Prostate gland (tissue), 2 donors: ENCODE measurements at regions of chr6 and their contacts with region 1.

Region 1: GRCh38 chr6:57257911-57258541 is 35.9 kb upstream of the RAB23 start:
- DNase-seq: no peak
- H3K4me3 ChIP-seq: no peak overlapping the region
- H3K27ac ChIP-seq: peak overlapping the region; percentile 63 to 66
- H3K4me1 ChIP-seq: no peaks in the 10 kb centered on the region
- H3K27me3 ChIP-seq: no peaks in the 10 kb centered on the region
- CTCF ChIP-seq: no peak
- POLR2A ChIP-seq: no peak

Region 2: GRCh38 chr6:57172136-57173055 is 85.6 kb before region 1 on chr6 and contains the start of gene BAG2:
- intact Hi-C with region 1: loop called (anchors 2 kb)
- DNase-seq: peak; percentile 68
- H3K4me3 ChIP-seq: peak within 1 kb of the TSS; percentile 66 to 80
- H3K27ac ChIP-seq: peak within 1 kb of the TSS; percentile 88 to 89
- H3K4me1 ChIP-seq: no peaks in the 10 kb centered on the region
- H3K27me3 ChIP-seq: no peaks in the 10 kb centered on the region
- CTCF ChIP-seq: peak in 2 of 4 experiments; percentile 13 to 47
- POLR2A ChIP-seq: peak; percentile 48
- total RNA-seq, gene BAG2: 5.4 to 6.8 TPM